Heart right ventricle (tissue), 16 donors: ENCODE measurements at regions of chr2 and their contacts with region 1.

Region 1: DNA sequence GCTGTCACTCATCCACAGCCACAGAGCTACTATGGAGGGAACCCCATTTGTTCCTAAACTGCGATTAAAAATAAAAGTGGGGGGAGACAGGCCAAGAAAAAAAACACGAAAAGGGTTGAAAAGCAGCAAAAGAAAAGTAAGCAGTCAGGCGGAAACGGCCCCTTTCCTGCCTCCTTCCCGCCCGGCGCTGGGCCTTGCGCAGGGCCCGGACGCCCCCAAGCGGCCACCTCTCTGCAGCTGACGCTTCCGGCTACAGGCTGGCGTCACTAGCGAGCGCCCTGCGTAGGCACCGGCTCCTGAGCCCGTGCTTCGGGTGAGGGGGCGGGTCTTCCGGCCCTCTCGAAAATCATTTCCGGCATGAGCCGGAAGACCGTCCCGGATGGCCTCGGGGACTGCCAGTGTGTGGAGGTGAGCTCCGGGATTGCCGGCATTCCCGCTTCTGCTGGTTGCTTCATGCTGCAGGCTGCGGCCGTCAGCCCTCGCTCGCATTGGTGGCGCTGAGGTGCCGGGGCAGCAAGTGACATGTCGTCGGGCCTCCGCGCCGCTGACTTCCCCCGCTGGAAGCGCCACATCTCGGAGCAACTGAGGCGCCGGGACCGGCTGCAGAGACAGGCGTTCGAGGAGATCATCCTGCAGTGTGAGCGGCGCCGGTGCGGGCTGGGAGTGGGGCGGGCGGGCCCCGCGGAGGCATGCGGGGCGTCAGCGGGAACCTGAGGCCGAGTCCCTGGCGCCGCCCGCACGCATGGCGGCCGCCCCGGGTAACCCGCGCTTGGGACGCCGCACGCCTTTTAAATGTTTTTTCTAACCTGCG is at the start of gene ATG16L1:
- DNase-seq: peak; percentile 94 to 96
- ATAC-seq: peak; percentile 99 to 100 (median 100)
- H3K4me3 ChIP-seq: peak within 1 kb of the TSS; percentile 80 to 99 (median 96)
- H3K27ac ChIP-seq: peak within 1 kb of the TSS in 9 of 10 donors; percentile 82 to 94 (median 86)
- H3K4me1 ChIP-seq: peaks cover 0 to 61% (median 25%) of the 10 kb centered on the region in 9 donors
- H3K27me3 ChIP-seq: no peaks in the 10 kb centered on the region
- CTCF ChIP-seq: peak; percentile 73 to 99 (median 95)
- total RNA-seq, gene ATG16L1: 13.2 to 19.2 (median 16.7) TPM

Region 2: GRCh38 chr2:232600053-232600773 is 651.3 kb before region 1 on chr2:
- intact Hi-C with region 1: loop called in 5 of 10 experiments (anchors 5 to 10 kb)
- DNase-seq: no peak
- ATAC-seq: no peak
- H3K4me3 ChIP-seq: no peak overlapping the region
- H3K27ac ChIP-seq: no peak overlapping the region
- H3K4me1 ChIP-seq: no peaks in the 10 kb centered on the region
- H3K27me3 ChIP-seq: no peaks in the 10 kb centered on the region
- CTCF ChIP-seq: no peak

Region 3: DNA sequence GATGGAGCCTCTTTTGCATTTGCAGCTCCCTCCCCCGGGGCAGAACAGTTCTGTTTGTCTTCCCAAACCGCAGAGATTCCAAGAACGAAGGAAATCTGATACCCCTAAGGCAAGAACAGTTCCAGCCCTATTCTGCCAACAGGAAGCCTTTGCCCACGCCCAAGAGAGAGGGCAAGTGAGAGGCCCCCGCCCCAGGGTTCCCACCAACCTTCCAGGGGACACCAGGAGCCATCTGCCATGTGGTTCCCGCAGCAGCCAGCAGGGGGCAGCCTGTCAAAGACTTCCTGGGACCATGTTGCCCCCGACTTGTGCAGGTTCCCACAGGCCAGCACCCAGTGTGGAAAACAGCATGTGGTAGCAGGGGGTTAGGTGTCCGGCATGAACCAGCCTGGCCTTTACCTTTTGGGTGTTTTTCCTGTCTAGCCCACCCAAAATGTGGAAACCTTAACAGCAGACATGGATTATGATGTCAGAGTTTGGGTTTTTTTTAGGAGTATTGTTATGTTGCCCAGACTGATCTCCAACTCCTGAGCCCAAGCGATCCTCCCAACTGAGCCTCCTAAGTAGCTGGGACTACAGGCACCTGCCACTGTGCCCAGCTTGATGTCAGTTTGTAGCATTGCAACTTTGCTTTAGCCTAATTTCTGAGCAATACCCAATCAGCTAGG is 639.8 kb before region 1 on chr2:
- intact Hi-C with region 1: loop called in 8 of 10 experiments (anchors 2 to 10 kb)
- DNase-seq: peak; percentile 53 to 79
- ATAC-seq: peak; percentile 38 to 77 (median 50)
- H3K4me3 ChIP-seq: no peak overlapping the region
- H3K27ac ChIP-seq: no peak overlapping the region
- H3K4me1 ChIP-seq: no peaks in the 10 kb centered on the region
- H3K27me3 ChIP-seq: no peaks in the 10 kb centered on the region
- CTCF ChIP-seq: peak; percentile 53 to 87 (median 79)

Region 4: DNA sequence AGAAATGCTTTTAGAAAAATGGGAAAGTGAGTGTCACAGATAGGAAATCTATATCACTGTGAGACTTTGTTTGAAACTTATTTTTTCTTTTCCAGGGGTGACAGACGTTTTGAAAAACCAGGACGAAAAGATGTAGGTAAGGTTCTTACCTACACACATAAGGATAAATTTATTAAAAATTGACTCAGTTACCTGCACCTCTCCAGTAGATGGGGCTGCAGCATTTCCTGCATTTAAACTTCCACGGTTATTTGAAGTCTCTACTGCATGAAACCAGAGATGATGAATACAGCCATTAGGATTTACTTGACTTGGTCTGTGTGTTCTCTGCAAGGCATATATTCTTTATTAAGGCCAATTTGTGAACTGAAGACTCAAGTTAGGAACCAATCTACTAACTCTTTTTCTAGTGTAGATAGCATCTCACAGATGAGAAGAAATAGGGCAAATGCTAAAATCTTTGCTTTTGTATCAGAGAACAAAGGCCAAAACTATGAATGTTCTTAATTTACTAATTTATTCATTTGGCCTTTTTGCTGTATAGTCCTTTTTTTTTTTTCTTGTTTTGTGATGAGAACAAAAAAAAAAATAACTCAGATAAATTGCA is 490.1 kb before region 1 on chr2:
- intact Hi-C with region 1: loop called in 1 of 10 experiments (anchors 10 kb)
- DNase-seq: no peak
- ATAC-seq: no peak
- H3K4me3 ChIP-seq: no peak overlapping the region
- H3K27ac ChIP-seq: no peak overlapping the region
- H3K4me1 ChIP-seq: no peaks in the 10 kb centered on the region
- H3K27me3 ChIP-seq: no peaks in the 10 kb centered on the region
- CTCF ChIP-seq: peak in 7 of 9 donors; percentile 32 to 50 (median 46)

Region 5: DNA sequence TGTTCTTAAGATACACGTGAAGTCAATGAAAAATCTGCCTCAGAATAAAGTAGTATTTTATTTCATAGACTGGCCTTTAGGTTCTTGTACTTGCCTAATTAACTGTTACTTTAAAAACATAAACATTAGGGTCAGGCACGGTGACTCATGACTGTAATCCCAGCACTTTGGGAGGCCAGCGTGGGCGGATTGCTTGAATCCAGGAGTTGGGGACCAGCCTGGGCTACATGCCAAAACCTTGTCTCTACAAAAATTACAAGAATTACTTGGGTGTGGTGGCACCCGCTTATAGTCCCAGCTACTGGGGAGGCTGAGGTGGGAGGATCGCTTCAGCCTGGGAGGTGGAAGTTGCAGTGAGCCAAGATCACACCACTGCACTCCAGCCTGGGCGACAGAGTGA is 397.4 kb before region 1 on chr2:
- intact Hi-C with region 1: loop called (anchors 1 to 10 kb)
- DNase-seq: no peak
- ATAC-seq: no peak
- H3K4me3 ChIP-seq: no peak overlapping the region
- H3K27ac ChIP-seq: peak overlapping the region in 1 of 10 donors; percentile 10
- H3K4me1 ChIP-seq: peaks cover 0 to 16% (median 0%) of the 10 kb centered on the region in 9 donors
- H3K27me3 ChIP-seq: no peaks in the 10 kb centered on the region
- CTCF ChIP-seq: no peak

Region 6: GRCh38 chr2:233053928-233054784 is 197.4 kb before region 1 on chr2:
- intact Hi-C with region 1: loop called in 2 of 10 experiments (anchors 5 to 10 kb)
- DNase-seq: peak; percentile 47 to 70
- ATAC-seq: peak in 2 of 8 donors; percentile 50 to 55
- H3K4me3 ChIP-seq: no peak overlapping the region
- H3K27ac ChIP-seq: no peak overlapping the region
- H3K4me1 ChIP-seq: peaks cover 0 to 35% (median 10%) of the 10 kb centered on the region in 9 donors
- H3K27me3 ChIP-seq: peaks cover 0 to 30% (median 0%) of the 10 kb centered on the region in 7 donors
- CTCF ChIP-seq: peak; percentile 74 to 96 (median 87)

Region 7: DNA sequence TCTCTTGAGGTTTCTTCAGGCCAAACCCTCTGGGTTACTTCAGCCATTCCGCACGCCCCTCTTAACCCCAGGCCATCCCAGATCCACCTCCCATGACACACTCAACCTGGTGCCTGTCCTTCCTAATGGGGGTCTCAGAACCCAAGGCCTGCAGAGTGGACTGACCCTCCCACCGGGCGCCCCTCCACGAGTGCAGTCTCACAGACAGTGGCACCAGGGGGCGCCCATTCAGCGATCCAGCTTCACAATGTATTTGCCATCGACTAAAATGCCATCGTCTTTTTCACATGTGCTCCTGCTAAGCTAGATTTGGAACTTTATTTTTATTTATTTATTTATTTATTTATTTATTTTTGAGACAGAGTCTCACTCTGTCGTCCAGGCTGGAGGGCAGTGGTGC is 152.9 kb before region 1 on chr2:
- intact Hi-C with region 1: loop called in 5 of 10 experiments (anchors 5 to 10 kb)
- DNase-seq: no peak
- ATAC-seq: peak in 1 of 8 donors; percentile 35
- H3K4me3 ChIP-seq: no peak overlapping the region
- H3K27ac ChIP-seq: no peak overlapping the region
- H3K4me1 ChIP-seq: peaks cover 0 to 28% (median 0%) of the 10 kb centered on the region in 9 donors
- H3K27me3 ChIP-seq: peaks cover 0 to 3% (median 0%) of the 10 kb centered on the region in 7 donors
- CTCF ChIP-seq: peak in 7 of 9 donors; percentile 23 to 47 (median 39)

Region 8: DNA sequence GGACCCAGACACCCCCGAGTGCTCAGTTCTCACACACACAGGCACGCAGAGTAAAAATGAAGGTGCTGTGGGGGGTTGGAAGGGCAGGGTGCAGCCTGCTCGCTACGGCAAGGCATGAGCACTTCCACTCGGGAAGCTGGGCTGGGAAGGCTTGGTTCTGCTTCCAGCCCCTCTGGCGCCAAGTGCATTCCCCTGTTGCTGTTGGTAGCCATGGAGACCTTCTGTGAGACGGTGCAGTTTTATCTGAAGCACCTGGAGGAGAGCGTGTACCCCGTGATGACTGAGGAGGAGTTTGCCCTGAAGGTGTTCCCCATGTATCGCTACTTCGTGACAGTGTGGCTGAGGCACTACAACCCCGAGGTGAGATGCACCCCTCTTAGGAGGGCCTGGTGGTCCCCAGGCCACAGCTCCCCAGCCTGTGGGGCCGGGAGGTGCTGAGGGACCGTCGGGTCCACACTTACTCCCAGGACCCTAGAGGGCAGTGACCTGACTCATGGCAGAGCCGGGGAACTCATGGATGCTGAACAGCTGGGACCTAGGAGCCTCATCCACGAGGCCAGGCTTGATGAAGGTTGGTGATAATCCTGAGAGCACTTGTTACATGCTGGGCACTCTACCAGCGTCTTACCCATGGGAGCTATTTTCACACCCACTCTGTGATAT is 542.1 kb after region 1 on chr2:
- intact Hi-C with region 1: no loop called
- DNase-seq: no peak
- ATAC-seq: no peak
- H3K4me3 ChIP-seq: no peak overlapping the region
- H3K27ac ChIP-seq: no peak overlapping the region
- H3K4me1 ChIP-seq: no peaks in the 10 kb centered on the region
- H3K27me3 ChIP-seq: peaks cover 0 to 7% (median 0%) of the 10 kb centered on the region in 7 donors
- CTCF ChIP-seq: no peak